Activated naive CD4-positive, alpha-beta T cell treated with anti-CD3 and anti-CD28 coated beads for 36 hours (primary cell): ENCODE measurements at regions of chr5 and their contacts with region 1.

Region 1: GRCh38 chr5:137938751-137939143 is 49.5 kb downstream of the PKD2L2 start:
- DNase-seq: no peak
- H3K4me3 Mint-ChIP-seq: no peak overlapping the region
- H3K27ac Mint-ChIP-seq: peak overlapping the region; percentile 77
- H3K4me1 Mint-ChIP-seq: peaks cover 39% of the 10 kb centered on the region
- H3K27me3 Mint-ChIP-seq: no peaks in the 10 kb centered on the region

Region 2: GRCh38 chr5:137888857-137889759 is 49.6 kb before region 1 on chr5 and contains the start of gene PKD2L2:
- CTCF ChIA-PET with region 1: interaction called, 6 read pairs
- intact Hi-C with region 1: loop called (anchors 2 kb)
- DNase-seq: peak; percentile 84
- H3K4me3 Mint-ChIP-seq: peak within 1 kb of the TSS; percentile 88
- H3K27ac Mint-ChIP-seq: peak within 1 kb of the TSS; percentile 87
- H3K4me1 Mint-ChIP-seq: peaks cover 21% of the 10 kb centered on the region
- H3K27me3 Mint-ChIP-seq: peaks cover 4% of the 10 kb centered on the region
- total RNA-seq, gene PKD2L2: not detected

Region 3: GRCh38 chr5:137921931-137922330 is 16.8 kb before region 1 on chr5:
- CTCF ChIA-PET with region 1: no interaction called
- intact Hi-C with region 1: no loop called
- DNase-seq: no peak
- H3K4me3 Mint-ChIP-seq: no peak overlapping the region
- H3K27ac Mint-ChIP-seq: no peak overlapping the region
- H3K4me1 Mint-ChIP-seq: no peaks in the 10 kb centered on the region
- H3K27me3 Mint-ChIP-seq: no peaks in the 10 kb centered on the region

Region 4: DNA sequence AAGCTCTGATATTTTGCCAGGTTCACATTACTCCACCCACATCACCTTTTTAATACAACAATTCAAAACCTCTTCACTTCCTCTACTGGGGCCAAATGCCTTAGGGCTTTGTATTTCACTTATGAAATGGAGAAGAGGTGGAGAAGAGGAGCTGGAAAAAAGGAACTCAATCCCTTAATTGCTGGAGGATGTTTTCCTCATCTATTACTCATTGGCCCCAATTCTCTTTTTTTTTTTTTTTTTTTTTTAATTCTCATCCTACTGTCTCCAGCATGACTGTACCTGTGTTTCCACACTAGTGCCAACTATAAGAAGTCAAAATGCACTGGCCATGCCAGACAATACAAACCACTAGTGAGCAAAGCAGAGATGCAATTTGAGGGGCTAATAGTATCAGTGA is 73.2 kb after region 1 on chr5:
- CTCF ChIA-PET with region 1: no interaction called
- intact Hi-C with region 1: no loop called
- DNase-seq: no peak
- H3K4me3 Mint-ChIP-seq: no peak overlapping the region
- H3K27ac Mint-ChIP-seq: no peak overlapping the region
- H3K4me1 Mint-ChIP-seq: no peaks in the 10 kb centered on the region
- H3K27me3 Mint-ChIP-seq: no peaks in the 10 kb centered on the region